ENCODE measurements at regions of chr17 and their contacts with region 1.

Region 1: GRCh38 chr17:46266656-46267544 is 28.0 kb upstream of the LRRC37A start:
- DNase-seq: peak; percentile 29 to 91
- H3K4me3 ChIP-seq: peak overlapping the region; percentile 74 to 89
- H3K27ac ChIP-seq: peak overlapping the region; percentile 81 to 87
- H3K4me1 ChIP-seq: no peaks in the 10 kb centered on the region
- H3K27me3 ChIP-seq: no peaks in the 10 kb centered on the region
- CTCF ChIP-seq: no peak

Region 2: DNA sequence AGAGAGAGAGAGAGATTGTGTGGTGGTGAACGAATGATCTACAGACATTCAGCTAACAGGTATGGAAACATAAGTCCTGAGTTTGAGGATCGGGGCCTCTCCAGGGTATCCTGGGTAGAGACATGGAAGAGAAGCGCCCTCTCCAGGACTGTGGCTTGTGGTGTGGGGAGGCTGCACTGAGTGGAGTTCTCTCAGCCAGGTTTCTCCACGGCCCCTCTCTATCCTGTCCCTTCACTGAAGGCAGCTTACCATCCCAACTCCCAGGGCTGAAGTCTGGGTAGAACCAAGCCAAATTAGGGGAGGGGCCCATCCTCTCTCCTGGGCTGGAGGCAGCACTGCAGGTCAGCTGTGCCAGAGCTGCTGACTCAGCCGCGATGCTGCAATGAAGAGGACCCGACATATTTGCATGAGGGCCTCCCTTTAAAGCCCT is 1305.0 kb before region 1 on chr17:
- intact Hi-C with region 1: no loop called
- DNase-seq: no peak
- H3K4me3 ChIP-seq: no peak overlapping the region
- H3K27ac ChIP-seq: no peak overlapping the region
- H3K4me1 ChIP-seq: peaks cover 0 to 5% of the 10 kb centered on the region in 2 donors
- H3K27me3 ChIP-seq: peaks cover 5% of the 10 kb centered on the region
- CTCF ChIP-seq: no peak

Region 3: GRCh38 chr17:45814622-45815606 is 452.0 kb before region 1 on chr17:
- intact Hi-C with region 1: no loop called
- DNase-seq: no peak
- H3K4me3 ChIP-seq: no peak overlapping the region
- H3K27ac ChIP-seq: no peak overlapping the region
- H3K4me1 ChIP-seq: no peaks in the 10 kb centered on the region
- H3K27me3 ChIP-seq: no peaks in the 10 kb centered on the region
- CTCF ChIP-seq: no peak

Region 4: GRCh38 chr17:45894022-45894784 is 372.7 kb before region 1 on chr17 and contains the start of gene MAPT:
- intact Hi-C with region 1: loop called (anchors 1 kb)
- DNase-seq: peak; percentile 27 to 93
- H3K4me3 ChIP-seq: peak within 1 kb of the TSS; percentile 70 to 84
- H3K27ac ChIP-seq: no peak within 1 kb of the TSS
- H3K4me1 ChIP-seq: peaks cover 6 to 25% of the 10 kb centered on the region in 2 donors
- H3K27me3 ChIP-seq: peaks cover 6% of the 10 kb centered on the region
- CTCF ChIP-seq: peak; percentile 68 to 97 (median 79)
- total RNA-seq, gene MAPT: 0.32 TPM

Region 5: DNA sequence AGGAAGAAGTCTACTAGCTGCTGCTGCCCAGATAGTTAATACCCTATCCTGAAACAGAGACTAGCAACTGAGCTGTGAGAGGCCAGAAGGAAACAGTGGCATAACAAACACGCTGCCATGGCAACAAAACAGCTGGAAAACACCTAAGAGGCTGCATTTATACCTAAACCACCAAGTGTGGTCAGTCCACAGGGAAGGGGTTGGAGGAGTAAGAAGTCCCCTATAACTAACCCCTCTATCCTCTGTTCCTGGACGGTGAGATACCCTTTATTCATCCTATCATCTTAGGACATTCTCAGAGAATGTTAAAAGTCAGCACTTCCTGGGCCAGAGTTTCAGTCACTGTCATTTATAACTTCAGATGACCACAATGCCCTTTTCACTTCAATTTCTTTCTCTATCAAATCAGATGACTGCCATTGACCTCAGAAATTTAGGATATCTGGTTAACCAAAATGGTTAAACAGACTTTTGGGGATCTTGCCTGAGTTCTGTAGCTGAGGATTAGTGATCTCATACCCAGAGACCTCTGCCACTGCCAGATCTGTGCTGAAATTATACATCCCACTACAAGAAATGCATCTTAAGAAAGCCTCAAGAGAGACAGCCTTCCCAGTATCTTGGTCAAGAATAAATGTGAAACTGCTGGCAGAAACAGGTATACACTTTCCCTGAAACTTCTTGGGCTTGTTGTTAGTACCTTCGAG is 231.6 kb before region 1 on chr17:
- intact Hi-C with region 1: loop called (anchors 5 kb)
- DNase-seq: no peak
- H3K4me3 ChIP-seq: no peak overlapping the region
- H3K27ac ChIP-seq: no peak overlapping the region
- H3K4me1 ChIP-seq: no peaks in the 10 kb centered on the region
- H3K27me3 ChIP-seq: no peaks in the 10 kb centered on the region
- CTCF ChIP-seq: no peak

Region 6: GRCh38 chr17:46193626-46194392 is 73.1 kb before region 1 on chr17:
- intact Hi-C with region 1: loop called (anchors 1 kb)
- DNase-seq: peak; percentile 83 to 98
- H3K4me3 ChIP-seq: peak overlapping the region; percentile 99 to 100
- H3K27ac ChIP-seq: peak overlapping the region; percentile 99 to 100
- H3K4me1 ChIP-seq: peaks cover 13 to 33% of the 10 kb centered on the region in 2 donors
- H3K27me3 ChIP-seq: no peaks in the 10 kb centered on the region
- CTCF ChIP-seq: peak in 2 of 3 experiments; percentile 2 to 17

Region 7: GRCh38 chr17:46212634-46213435 is 54.1 kb before region 1 on chr17:
- intact Hi-C with region 1: no loop called
- DNase-seq: peak in 1 of 2 donors; percentile 80
- H3K4me3 ChIP-seq: no peak overlapping the region
- H3K27ac ChIP-seq: peak overlapping the region in 1 of 2 donors; percentile 46
- H3K4me1 ChIP-seq: peaks cover 6 to 15% of the 10 kb centered on the region in 2 donors
- H3K27me3 ChIP-seq: no peaks in the 10 kb centered on the region
- CTCF ChIP-seq: peak; percentile 56 to 82 (median 77)

Measured in ascending aorta (tissue), 2 donors.